ENCODE measurements at regions of chr18 and their contacts with region 1.

Region 1: DNA sequence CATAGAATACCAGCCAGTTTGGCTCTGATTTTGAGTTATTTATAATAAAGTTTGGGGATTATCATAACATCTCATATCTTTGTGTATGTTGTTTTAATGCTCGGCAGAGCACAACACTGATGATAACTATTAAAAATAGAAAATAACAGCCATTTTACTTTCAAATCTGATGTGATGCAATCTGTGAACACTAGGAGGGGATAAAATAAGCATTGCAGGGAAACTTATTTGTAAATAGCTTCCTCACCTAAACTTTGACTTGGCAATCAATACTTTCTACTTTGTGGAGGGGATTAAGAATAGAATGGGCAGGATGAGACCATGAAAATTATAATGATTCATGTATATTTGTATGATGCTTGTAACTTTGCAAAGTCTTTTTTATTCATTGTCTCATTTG is 54.4 kb downstream of the USP14 start:
- DNase-seq: no peak
- CTCF ChIP-seq: no peak

Region 2: DNA sequence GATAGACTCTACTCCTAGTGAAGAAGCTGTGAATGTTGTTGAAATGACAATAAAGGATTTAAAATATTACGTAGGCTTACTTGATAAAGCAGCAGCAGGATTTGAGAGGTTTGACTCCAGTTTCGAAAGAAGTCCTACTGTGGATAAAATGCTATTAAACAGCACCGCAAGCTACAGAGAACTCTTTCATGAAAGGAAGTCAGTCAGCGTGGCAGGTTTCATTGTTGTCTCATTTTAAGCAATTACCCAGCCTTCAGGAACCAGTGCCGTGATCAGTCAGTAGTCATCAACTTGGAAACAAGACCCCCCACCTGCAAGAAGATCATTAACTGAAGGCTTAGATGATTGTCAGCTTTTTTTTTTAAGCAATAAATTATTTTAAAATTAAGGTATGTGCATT is 40.4 kb before region 1 on chr18:
- CTCF ChIA-PET with region 1: no interaction called
- POLR2A ChIA-PET with region 1: no interaction called
- DNase-seq: no peak
- CTCF ChIP-seq: no peak

Region 3: DNA sequence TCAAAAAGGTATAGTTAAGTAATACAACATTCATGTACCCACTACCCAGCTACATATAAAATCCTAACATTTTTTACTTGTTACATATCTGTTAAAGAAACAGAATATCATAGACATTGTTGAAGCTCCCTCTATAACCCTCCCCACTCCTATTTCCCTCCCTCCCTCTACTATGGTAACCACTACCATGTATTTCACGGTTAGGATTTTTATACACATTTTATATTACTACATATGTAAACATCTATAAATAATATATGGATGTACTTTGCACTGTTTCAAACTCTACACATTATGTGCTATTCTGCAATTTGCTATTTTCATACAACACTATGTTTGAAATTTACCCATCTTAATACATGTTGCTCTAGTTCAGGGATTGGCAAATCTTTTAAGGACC is 18.8 kb after region 1 on chr18:
- CTCF ChIA-PET with region 1: interaction called, 13 read pairs
- POLR2A ChIA-PET with region 1: no interaction called
- DNase-seq: no peak
- CTCF ChIP-seq: no peak

Region 4: DNA sequence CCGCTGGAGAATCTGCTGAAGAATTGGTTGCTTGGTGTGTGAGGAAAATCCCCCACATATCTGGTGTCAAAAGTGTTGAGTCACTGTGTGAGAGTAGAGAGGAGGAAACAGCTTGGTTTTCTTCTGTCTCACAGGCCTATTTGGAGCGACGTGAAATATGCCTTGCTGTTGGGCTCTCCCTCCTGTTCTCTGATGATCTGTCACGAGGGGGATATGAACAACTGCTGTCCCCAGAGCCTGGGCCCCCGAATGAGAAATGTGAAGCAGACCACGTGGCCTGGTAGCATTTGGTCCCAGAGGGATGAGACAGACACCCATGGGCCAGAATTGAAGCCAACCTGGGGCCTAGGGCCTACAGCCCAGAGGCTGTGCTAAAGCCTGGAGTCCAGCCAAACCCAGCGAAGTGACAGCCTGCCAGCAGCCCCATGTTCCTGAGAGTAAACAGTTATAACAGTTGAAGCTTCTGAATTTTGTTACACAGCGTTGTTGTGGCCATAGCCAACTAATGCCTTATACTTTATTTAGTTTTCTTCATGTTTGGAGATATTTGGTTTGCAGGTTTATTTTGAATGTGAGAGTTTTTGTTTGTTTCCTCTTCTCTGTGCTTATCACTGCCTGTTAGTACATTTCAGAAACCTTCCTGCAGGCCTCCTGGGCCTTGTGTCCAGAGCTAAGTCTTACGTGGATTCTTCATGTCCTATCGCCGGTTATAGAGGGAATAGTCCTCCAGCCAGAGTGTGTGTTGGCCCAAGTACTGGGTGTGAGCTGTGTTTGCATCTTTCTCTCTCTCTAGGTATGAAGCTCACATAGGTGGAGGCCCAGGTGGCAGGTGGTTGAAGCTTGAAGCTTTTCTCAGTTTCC is 306.5 kb after region 1 on chr18:
- CTCF ChIA-PET with region 1: no interaction called
- POLR2A ChIA-PET with region 1: no interaction called
- DNase-seq: peak; percentile 68
- CTCF ChIP-seq: no peak